Naive thymus-derived CD4-positive, alpha-beta T cell (primary cell): ENCODE measurements at regions of chr1 and their contacts with region 1.

Region 1: DNA sequence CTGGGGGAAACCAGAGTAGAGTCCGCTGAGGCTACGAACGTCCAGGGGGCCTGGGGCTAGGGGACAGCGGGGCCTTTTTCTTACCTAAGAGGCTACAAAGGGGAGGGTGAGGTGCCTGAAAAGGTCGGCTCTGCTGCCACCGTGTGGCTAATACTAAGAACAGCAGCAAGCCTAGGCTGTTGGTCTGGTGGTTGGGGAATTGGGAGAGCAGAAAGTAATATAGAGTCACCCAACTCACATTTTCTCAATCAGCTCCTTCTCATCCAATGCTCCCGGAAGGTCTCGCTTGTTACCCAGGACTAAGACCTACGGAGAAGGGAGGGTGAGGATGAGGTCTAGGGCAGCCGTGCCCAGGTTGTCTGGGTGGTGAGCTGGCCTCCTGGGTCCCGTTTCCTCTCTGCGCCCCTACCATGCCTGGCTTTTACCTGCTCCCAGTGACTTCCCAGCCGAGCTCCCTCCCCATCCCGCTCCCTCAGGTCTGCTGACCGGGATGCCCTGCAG is 9.3 kb downstream of the ARL8A start:
- DNase-seq: peak in 7 of 9 donors; percentile 27 to 63 (median 53)
- ATAC-seq: peak; percentile 92
- H3K4me3 ChIP-seq: no peak overlapping the region
- H3K4me3 Mint-ChIP-seq: no peak overlapping the region
- H3K27ac ChIP-seq: no peak overlapping the region
- H3K27ac Mint-ChIP-seq: peak overlapping the region in 2 of 9 donors; percentile 24 to 43
- H3K4me1 ChIP-seq: no peaks in the 10 kb centered on the region
- H3K4me1 Mint-ChIP-seq: peaks cover 4 to 15% (median 8%) of the 10 kb centered on the region in 7 donors
- H3K27me3 ChIP-seq: no peaks in the 10 kb centered on the region
- H3K27me3 Mint-ChIP-seq: no peaks in the 10 kb centered on the region

Region 2: GRCh38 chr1:201999625-202000238 is 135.5 kb before region 1 on chr1:
- CTCF ChIA-PET with region 1: interaction called, 10 read pairs
- POLR2A ChIA-PET with region 1: no interaction called
- intact Hi-C with region 1: loop called in 1 of 2 experiments (anchors 2 kb)
- DNase-seq: peak in 4 of 9 donors; percentile 18 to 29 (median 23)
- ATAC-seq: peak; percentile 82
- H3K4me3 ChIP-seq: no peak overlapping the region
- H3K4me3 Mint-ChIP-seq: no peak overlapping the region
- H3K27ac ChIP-seq: no peak overlapping the region
- H3K27ac Mint-ChIP-seq: no peak overlapping the region
- H3K4me1 ChIP-seq: no peaks in the 10 kb centered on the region
- H3K4me1 Mint-ChIP-seq: no peaks in the 10 kb centered on the region
- H3K27me3 ChIP-seq: no peaks in the 10 kb centered on the region
- H3K27me3 Mint-ChIP-seq: no peaks in the 10 kb centered on the region

Region 3: GRCh38 chr1:202009326-202010179 is 125.7 kb before region 1 on chr1:
- CTCF ChIA-PET with region 1: interaction called, 3 read pairs
- POLR2A ChIA-PET with region 1: no interaction called
- intact Hi-C with region 1: loop called (anchors 1 kb)
- DNase-seq: peak; percentile 11 to 69 (median 41)
- ATAC-seq: peak; percentile 85
- H3K4me3 ChIP-seq: no peak overlapping the region
- H3K4me3 Mint-ChIP-seq: no peak overlapping the region
- H3K27ac ChIP-seq: no peak overlapping the region
- H3K27ac Mint-ChIP-seq: no peak overlapping the region
- H3K4me1 ChIP-seq: no peaks in the 10 kb centered on the region
- H3K4me1 Mint-ChIP-seq: peaks cover 0 to 2% (median 0%) of the 10 kb centered on the region in 7 donors
- H3K27me3 ChIP-seq: no peaks in the 10 kb centered on the region
- H3K27me3 Mint-ChIP-seq: no peaks in the 10 kb centered on the region